ENCODE measurements at regions of chr10 and their contacts with region 1.

Region 1: GRCh38 chr10:26574783-26575182 is 122.7 kb upstream of the PDSS1 start:
- DNase-seq: no peak
- H3K4me3 ChIP-seq: no peak overlapping the region
- H3K27ac ChIP-seq: no peak overlapping the region
- H3K4me1 ChIP-seq: no peaks in the 10 kb centered on the region
- H3K27me3 ChIP-seq: no peaks in the 10 kb centered on the region
- CTCF ChIP-seq: no peak

Region 2: GRCh38 chr10:25738776-25739175 is 836.0 kb before region 1 on chr10:
- intact Hi-C with region 1: no loop called
- DNase-seq: no peak
- H3K4me3 ChIP-seq: no peak overlapping the region
- H3K27ac ChIP-seq: no peak overlapping the region
- H3K4me1 ChIP-seq: no peaks in the 10 kb centered on the region
- H3K27me3 ChIP-seq: no peaks in the 10 kb centered on the region
- CTCF ChIP-seq: no peak

Region 3: GRCh38 chr10:27319752-27320561 is 745.2 kb after region 1 on chr10:
- intact Hi-C with region 1: loop called (anchors 5 kb)
- DNase-seq: peak; percentile 49 to 83
- H3K4me3 ChIP-seq: peak overlapping the region; percentile 9 to 54
- H3K27ac ChIP-seq: peak overlapping the region; percentile 27 to 67
- H3K4me1 ChIP-seq: peaks cover 0 to 3% of the 10 kb centered on the region in 2 donors
- H3K27me3 ChIP-seq: no peaks in the 10 kb centered on the region
- CTCF ChIP-seq: no peak

Measured in ascending aorta (tissue), 2 donors.